Dendritic cell treated with granulocyte-macrophage colony-stimulating factor and Interleukin-4, amounts not matched to agents 40 ng/mL and 50 ng/mL, for 4 days (primary cell): ENCODE measurements at regions of chr7 and their contacts with region 1.

Region 1: GRCh38 chr7:81256991-81257390 is 338.1 kb upstream of the SEMA3C start:
- H3K4me3 Mint-ChIP-seq: no peak overlapping the region
- H3K27ac Mint-ChIP-seq: no peak overlapping the region
- H3K4me1 Mint-ChIP-seq: no peaks in the 10 kb centered on the region
- H3K27me3 Mint-ChIP-seq: no peaks in the 10 kb centered on the region

Region 2: DNA sequence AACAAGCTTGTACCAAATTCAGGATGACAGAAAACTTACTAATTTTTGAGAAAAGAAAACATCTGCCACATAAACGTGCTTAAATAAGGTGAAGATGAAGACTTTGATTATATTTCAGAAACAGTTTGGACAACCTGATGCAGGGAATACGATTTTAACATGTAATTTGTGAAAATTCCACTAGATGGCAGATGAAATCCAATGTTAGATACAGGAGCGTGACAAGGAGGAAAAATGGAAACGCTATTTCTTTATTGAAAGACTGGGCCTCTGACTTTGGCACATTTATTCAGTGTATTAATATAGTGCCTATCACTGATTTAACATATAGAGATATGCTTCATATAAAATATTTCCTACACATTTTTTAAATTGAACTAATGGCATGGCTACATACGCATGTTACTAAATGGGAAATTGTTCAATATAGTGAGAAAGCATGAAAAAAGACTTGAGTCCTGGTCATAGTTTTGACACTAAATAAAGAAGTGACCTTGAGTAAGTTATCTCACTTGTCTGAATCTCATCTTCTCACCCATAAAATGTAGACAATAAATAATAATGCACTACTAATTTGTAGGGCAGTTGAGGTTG is 557.8 kb before region 1 on chr7:
- intact Hi-C with region 1: loop called (anchors 5 kb)
- H3K4me3 Mint-ChIP-seq: no peak overlapping the region
- H3K27ac Mint-ChIP-seq: no peak overlapping the region
- H3K4me1 Mint-ChIP-seq: peaks cover 13% of the 10 kb centered on the region
- H3K27me3 Mint-ChIP-seq: no peaks in the 10 kb centered on the region

Region 3: GRCh38 chr7:81327468-81328266 is 70.7 kb after region 1 on chr7:
- intact Hi-C with region 1: no loop called
- H3K4me3 Mint-ChIP-seq: no peak overlapping the region
- H3K27ac Mint-ChIP-seq: no peak overlapping the region
- H3K4me1 Mint-ChIP-seq: no peaks in the 10 kb centered on the region
- H3K27me3 Mint-ChIP-seq: no peaks in the 10 kb centered on the region